Activated naive CD4-positive, alpha-beta T cell treated with anti-CD3 and anti-CD28 coated beads for 36 hours (primary cell): ENCODE measurements at regions of chr3 and their contacts with region 1.

Region 1: GRCh38 chr3:106013971-106014370 is 145.2 kb upstream of the CBLB start:
- DNase-seq: no peak
- H3K4me3 Mint-ChIP-seq: no peak overlapping the region
- H3K27ac Mint-ChIP-seq: peak overlapping the region; percentile 37
- H3K4me1 Mint-ChIP-seq: peaks cover 49% of the 10 kb centered on the region
- H3K27me3 Mint-ChIP-seq: no peaks in the 10 kb centered on the region

Region 2: GRCh38 chr3:105686278-105686897 is 327.6 kb before region 1 on chr3:
- CTCF ChIA-PET with region 1: interaction called, 3 read pairs
- intact Hi-C with region 1: loop called (anchors 5 kb)
- DNase-seq: no peak
- H3K4me3 Mint-ChIP-seq: no peak overlapping the region
- H3K27ac Mint-ChIP-seq: no peak overlapping the region
- H3K4me1 Mint-ChIP-seq: peaks cover 26% of the 10 kb centered on the region
- H3K27me3 Mint-ChIP-seq: no peaks in the 10 kb centered on the region

Region 3: DNA sequence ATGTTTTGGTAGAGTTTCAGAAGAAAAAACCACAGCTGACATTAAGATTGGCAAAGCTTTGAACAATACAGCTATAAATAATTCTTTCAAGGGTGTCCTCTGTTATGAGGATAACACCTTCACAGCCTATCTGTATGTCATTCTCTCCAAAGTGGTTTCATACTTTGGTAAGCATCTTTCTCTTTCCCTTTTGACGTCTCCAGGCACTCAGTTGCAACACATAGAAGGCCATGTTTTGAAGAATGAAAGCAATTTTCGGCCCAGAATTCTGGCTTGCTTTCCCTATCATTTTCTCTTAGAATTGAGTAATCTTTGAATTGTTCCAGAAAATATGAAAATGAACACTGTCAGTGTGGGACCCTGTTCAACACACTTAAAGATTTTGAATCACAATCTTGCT is 54.8 kb after region 1 on chr3:
- CTCF ChIA-PET with region 1: no interaction called
- intact Hi-C with region 1: loop called (anchors 2 kb)
- DNase-seq: peak; percentile 26
- H3K4me3 Mint-ChIP-seq: no peak overlapping the region
- H3K27ac Mint-ChIP-seq: no peak overlapping the region
- H3K4me1 Mint-ChIP-seq: peaks cover 13% of the 10 kb centered on the region
- H3K27me3 Mint-ChIP-seq: no peaks in the 10 kb centered on the region

Region 4: DNA sequence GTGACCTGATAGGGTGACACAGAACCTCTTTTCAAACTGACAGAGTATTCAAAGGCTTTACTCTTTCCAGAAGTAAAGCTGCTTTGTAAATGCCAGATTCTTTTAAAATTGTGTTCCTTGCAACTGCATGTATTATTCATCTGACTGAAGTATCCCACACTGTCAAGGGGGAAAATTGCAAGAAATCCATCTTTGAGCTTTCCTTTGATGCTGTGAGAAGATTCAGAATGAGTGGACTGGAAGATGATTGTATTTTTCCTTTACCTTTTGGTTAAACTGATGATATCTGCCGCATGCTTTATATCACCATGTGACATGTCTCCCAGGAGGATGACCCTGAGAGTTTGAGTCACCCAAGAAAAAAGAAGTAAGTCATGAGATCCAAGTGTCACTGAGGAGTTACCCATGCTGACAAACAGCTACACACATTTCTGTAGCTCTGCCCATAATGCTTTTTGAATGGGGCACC is 105.7 kb after region 1 on chr3:
- CTCF ChIA-PET with region 1: no interaction called
- intact Hi-C with region 1: loop called (anchors 1 kb)
- DNase-seq: peak; percentile 57
- H3K4me3 Mint-ChIP-seq: no peak overlapping the region
- H3K27ac Mint-ChIP-seq: peak overlapping the region; percentile 73
- H3K4me1 Mint-ChIP-seq: peaks cover 28% of the 10 kb centered on the region
- H3K27me3 Mint-ChIP-seq: no peaks in the 10 kb centered on the region

Region 5: DNA sequence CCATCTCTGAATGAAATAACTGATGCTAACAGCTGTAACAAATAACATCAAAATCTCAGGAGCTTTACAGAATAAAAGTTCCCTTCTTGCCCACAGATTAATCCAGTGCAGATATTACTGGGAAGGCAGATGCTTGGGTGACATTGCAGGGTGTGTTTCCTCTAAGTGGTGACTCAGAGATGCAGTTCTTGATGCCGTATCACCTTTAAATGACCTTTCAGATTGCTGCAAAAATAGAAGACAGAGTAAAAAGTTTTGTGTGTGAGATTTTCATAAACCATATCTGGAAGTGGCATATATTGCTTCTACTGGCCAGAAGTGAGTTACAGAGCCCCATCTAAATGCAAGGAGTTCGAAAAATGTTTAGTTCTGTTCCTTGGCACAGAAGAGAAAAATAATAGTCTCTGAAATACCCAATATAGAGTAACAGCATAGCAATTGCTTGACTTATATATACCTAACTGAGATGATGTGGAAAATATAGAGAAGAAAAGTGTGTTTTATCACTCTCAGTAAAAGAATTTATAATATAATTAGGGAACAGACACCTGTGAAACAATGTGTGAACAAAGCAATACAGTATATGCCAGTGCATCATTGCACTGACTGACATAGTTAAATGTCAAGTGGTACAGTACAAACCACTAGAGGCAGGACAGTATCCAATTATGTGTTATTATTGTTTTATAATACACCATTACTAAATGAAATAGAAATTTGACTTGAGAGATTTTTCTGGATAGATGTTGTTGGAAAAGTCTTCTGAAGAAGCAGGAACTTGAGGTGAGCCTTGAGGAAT is 285.5 kb after region 1 on chr3:
- CTCF ChIA-PET with region 1: no interaction called
- intact Hi-C with region 1: loop called (anchors 2 kb)
- DNase-seq: peak; percentile 46
- H3K4me3 Mint-ChIP-seq: no peak overlapping the region
- H3K27ac Mint-ChIP-seq: peak overlapping the region; percentile 40
- H3K4me1 Mint-ChIP-seq: peaks cover 54% of the 10 kb centered on the region
- H3K27me3 Mint-ChIP-seq: no peaks in the 10 kb centered on the region

Region 6: GRCh38 chr3:106423321-106424225 is 409.6 kb after region 1 on chr3:
- CTCF ChIA-PET with region 1: no interaction called
- intact Hi-C with region 1: loop called (anchors 2 kb)
- DNase-seq: peak; percentile 55
- H3K4me3 Mint-ChIP-seq: no peak overlapping the region
- H3K27ac Mint-ChIP-seq: peak overlapping the region; percentile 80
- H3K4me1 Mint-ChIP-seq: peaks cover 46% of the 10 kb centered on the region
- H3K27me3 Mint-ChIP-seq: peaks cover 2% of the 10 kb centered on the region

Region 7: GRCh38 chr3:106428565-106428994 is 414.6 kb after region 1 on chr3:
- CTCF ChIA-PET with region 1: no interaction called
- intact Hi-C with region 1: loop called (anchors 2 kb)
- DNase-seq: peak; percentile 66
- H3K4me3 Mint-ChIP-seq: no peak overlapping the region
- H3K27ac Mint-ChIP-seq: peak overlapping the region; percentile 81
- H3K4me1 Mint-ChIP-seq: peaks cover 46% of the 10 kb centered on the region
- H3K27me3 Mint-ChIP-seq: no peaks in the 10 kb centered on the region